ENCODE measurements at regions of chr15 and their contacts with region 1.

Region 1: GRCh38 chr15:63212050-63213004 is 22.9 kb downstream of the RAB8B start:
- DNase-seq: peak; percentile 73 to 91 (median 89)
- H3K4me3 ChIP-seq: peak overlapping the region in 2 of 3 experiments; percentile 23 to 52
- H3K4me3 Mint-ChIP-seq: peak overlapping the region; percentile 32 to 70
- H3K27ac ChIP-seq: peak overlapping the region; percentile 89 to 90
- H3K27ac Mint-ChIP-seq: peak overlapping the region; percentile 87 to 97 (median 95)
- H3K4me1 ChIP-seq: peaks cover 40 to 62% of the 10 kb centered on the region in 2 donors
- H3K4me1 Mint-ChIP-seq: peaks cover 61% of the 10 kb centered on the region
- H3K27me3 ChIP-seq: no peaks in the 10 kb centered on the region
- H3K27me3 Mint-ChIP-seq: peaks cover 0 to 2% (median 0%) of the 10 kb centered on the region in 3 donors
- CTCF ChIP-seq: no peak

Region 2: DNA sequence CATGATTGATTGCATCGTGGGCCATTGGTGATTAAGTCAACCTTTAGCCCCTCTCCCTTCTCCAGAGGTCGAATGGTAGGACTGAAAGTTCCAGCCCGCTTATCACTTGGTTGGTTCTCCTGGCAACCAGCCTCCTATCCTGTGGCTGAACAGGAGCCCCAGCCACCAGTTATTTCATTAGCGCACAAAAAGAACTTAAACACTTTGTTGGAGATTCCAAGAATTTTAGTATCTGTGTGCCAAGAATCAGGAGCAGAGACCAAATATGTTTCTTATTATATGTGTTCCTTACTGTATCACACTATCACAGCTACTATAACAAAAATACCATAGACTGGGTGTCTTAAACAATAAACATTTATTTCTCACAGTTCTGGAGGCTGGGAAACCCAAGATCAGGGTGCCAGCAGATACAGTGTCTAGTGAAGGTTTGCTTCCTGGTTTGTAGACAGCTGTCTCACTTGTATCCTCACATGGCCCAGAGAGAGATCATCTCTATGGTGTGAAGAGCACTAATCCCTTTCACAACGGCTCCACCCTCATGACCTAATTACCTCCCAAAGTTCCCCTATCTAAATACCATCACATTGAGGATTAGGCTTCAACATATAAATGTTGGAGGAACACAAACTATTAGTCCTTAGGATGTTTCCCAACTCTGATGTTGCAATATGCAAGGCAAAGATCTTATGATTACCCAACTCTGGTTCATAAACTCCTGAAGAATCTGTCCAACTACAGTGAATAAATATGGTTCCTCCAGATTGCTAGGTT is 34.6 kb after region 1 on chr15:
- intact Hi-C with region 1: loop called (anchors 2 to 5 kb)
- DNase-seq: peak; percentile 93 to 99 (median 99)
- H3K4me3 ChIP-seq: peak overlapping the region in 1 of 3 experiments; percentile 33
- H3K4me3 Mint-ChIP-seq: peak overlapping the region; percentile 1 to 53
- H3K27ac ChIP-seq: peak overlapping the region; percentile 81 to 82
- H3K27ac Mint-ChIP-seq: peak overlapping the region; percentile 89 to 97 (median 96)
- H3K4me1 ChIP-seq: peaks cover 27 to 33% of the 10 kb centered on the region in 2 donors
- H3K4me1 Mint-ChIP-seq: peaks cover 40% of the 10 kb centered on the region
- H3K27me3 ChIP-seq: no peaks in the 10 kb centered on the region
- H3K27me3 Mint-ChIP-seq: no peaks in the 10 kb centered on the region
- CTCF ChIP-seq: no peak

Region 3: DNA sequence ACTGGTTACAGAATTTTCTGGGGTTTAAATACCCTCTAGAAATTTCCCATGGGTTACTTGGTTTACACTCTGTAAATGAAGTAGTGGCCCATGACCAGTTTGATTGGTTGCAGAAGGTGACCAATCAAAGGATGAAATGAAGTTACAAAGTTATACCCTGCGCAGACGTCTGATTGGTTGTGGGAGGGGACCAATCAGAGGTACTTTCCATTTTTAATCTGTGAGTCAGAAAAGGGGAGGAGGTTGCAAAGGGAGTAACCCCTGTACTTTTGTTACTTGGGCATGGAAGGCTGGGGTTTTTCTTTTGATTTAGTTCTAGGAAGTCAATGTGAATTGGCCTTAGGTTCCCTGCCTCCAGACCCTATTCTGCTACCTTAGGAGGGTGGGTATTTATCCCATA is 46.3 kb after region 1 on chr15:
- intact Hi-C with region 1: no loop called
- DNase-seq: peak in 1 of 3 donors; percentile 65
- H3K4me3 ChIP-seq: no peak overlapping the region
- H3K4me3 Mint-ChIP-seq: no peak overlapping the region
- H3K27ac ChIP-seq: peak overlapping the region in 1 of 2 donors; percentile 35
- H3K27ac Mint-ChIP-seq: no peak overlapping the region
- H3K4me1 ChIP-seq: no peaks in the 10 kb centered on the region
- H3K4me1 Mint-ChIP-seq: peaks cover 5% of the 10 kb centered on the region
- H3K27me3 ChIP-seq: no peaks in the 10 kb centered on the region
- H3K27me3 Mint-ChIP-seq: peaks cover 0 to 1% (median 0%) of the 10 kb centered on the region in 3 donors
- CTCF ChIP-seq: no peak